ENCODE measurements at regions of chr2 and their contacts with region 1.

Region 1: GRCh38 chr2:37083873-37084794 is at the starts of genes GPATCH11 and HEATR5B:
- DNase-seq: peak; percentile 80 to 98 (median 89)
- ATAC-seq: peak; percentile 84
- H3K4me3 ChIP-seq: peak within 1 kb of the TSS; percentile 94
- H3K4me3 Mint-ChIP-seq: no peak within 1 kb of the TSS
- H3K27ac ChIP-seq: peak within 1 kb of the TSS; percentile 77 to 82
- H3K27ac Mint-ChIP-seq: no peak within 1 kb of the TSS
- H3K4me1 ChIP-seq: peaks cover 42% of the 10 kb centered on the region
- H3K4me1 Mint-ChIP-seq: no peaks in the 10 kb centered on the region
- H3K27me3 ChIP-seq: no peaks in the 10 kb centered on the region
- H3K27me3 Mint-ChIP-seq: no peaks in the 10 kb centered on the region
- CTCF ChIP-seq: no peak
- total RNA-seq, gene GPATCH11: 4.0 to 4.1 TPM
- total RNA-seq, gene HEATR5B: 23.4 to 23.9 TPM

Region 2: DNA sequence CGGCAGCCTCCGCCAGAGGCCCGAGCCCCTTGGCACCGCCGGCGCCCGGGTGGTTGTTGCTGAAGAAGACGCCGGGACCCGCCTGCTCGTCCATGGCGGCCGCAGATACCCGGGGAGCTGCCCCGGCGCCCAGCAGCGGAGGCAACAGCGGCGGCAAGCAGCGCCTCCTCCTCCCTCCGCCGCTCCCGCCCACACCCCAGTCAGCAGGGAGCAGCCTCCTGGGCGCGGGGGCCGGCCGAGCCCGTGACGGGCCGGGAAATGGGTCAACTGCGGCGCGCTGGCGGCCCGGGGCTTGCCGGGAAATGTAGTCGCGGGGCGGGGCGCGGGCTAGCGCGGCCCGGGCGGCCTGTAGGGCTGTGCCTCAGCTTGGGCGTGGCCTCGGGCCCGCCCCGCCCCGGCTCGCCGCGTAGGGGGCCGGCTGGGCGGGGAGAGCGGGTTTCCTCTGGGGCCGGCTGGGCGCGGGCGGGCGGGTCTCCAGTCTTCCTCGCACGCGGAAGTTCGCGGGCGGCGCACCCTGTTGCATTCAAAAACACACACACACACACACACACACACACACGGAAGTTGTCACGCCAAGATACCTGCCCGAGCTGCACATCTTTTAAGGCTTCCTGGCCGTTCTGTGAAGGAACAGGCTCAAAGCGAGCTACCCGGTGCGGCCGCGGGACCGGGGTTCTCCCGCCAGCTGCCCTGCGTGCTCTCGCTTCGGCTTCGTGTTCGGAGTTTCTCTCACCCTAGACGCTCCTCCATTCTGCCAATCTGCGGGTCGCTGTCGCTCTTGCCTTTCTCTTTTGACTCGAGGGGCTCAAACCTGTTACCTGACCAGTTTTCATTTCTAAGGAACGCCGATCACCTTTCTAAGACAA is 117.5 kb before region 1 on chr2 and contains the start of gene STRN:
- CTCF ChIA-PET with region 1: no interaction called
- POLR2A ChIA-PET with region 1: interaction called, 16 read pairs
- intact Hi-C with region 1: loop called (anchors 5 to 10 kb)
- DNase-seq: peak; percentile 93 to 99 (median 98)
- ATAC-seq: peak; percentile 88
- H3K4me3 ChIP-seq: peak within 1 kb of the TSS; percentile 86
- H3K4me3 Mint-ChIP-seq: peak within 1 kb of the TSS; percentile 99
- H3K27ac ChIP-seq: peak within 1 kb of the TSS; percentile 89 to 90
- H3K27ac Mint-ChIP-seq: peak within 1 kb of the TSS; percentile 97
- H3K4me1 ChIP-seq: peaks cover 26% of the 10 kb centered on the region
- H3K4me1 Mint-ChIP-seq: peaks cover 58% of the 10 kb centered on the region
- H3K27me3 ChIP-seq: no peaks in the 10 kb centered on the region
- H3K27me3 Mint-ChIP-seq: no peaks in the 10 kb centered on the region
- CTCF ChIP-seq: no peak
- total RNA-seq, gene STRN: 20.4 to 20.8 TPM

Region 3: DNA sequence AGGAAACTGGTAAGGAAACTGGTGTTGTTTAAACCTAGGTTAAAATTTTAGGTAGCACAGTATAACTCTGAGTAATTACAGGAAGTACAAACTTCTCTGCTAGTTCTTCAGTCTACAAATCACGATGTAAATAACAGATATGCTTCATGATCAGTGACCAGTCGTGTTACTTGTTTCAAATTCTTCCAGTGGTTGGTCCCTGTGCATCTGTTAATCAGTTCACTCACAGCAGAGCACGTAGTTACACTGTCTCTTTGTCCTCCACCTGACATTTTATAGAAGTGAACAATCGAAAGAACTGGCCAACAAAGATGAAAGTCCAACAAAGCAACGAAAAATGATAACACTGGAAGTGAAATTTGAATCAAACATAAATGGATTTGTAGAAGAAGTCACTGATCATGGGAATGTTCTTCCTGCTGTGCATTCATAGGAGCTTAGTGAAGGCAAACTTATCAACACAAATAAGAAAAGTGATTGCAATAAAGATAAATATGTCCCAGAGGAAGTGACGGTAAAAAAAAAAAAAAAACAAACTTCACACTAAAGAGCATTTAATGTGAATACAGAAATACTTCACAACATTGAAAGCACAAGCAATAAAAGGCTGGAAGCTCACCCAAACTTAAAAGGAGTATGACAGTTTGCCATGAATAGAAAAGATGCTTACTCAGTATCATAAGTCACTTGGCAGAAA is 65.6 kb after region 1 on chr2:
- CTCF ChIA-PET with region 1: no interaction called
- POLR2A ChIA-PET with region 1: interaction called, 3 read pairs
- intact Hi-C with region 1: loop called in 1 of 2 experiments (anchors 5 kb)
- DNase-seq: peak in 3 of 14 experiments; percentile 38 to 58 (median 54)
- ATAC-seq: peak; percentile 88
- H3K4me3 ChIP-seq: peak overlapping the region; percentile 3
- H3K4me3 Mint-ChIP-seq: peak overlapping the region; percentile 57
- H3K27ac ChIP-seq: no peak overlapping the region
- H3K27ac Mint-ChIP-seq: peak overlapping the region; percentile 81
- H3K4me1 ChIP-seq: peaks cover 1% of the 10 kb centered on the region
- H3K4me1 Mint-ChIP-seq: peaks cover 52% of the 10 kb centered on the region
- H3K27me3 ChIP-seq: no peaks in the 10 kb centered on the region
- H3K27me3 Mint-ChIP-seq: no peaks in the 10 kb centered on the region
- CTCF ChIP-seq: no peak

Region 4: DNA sequence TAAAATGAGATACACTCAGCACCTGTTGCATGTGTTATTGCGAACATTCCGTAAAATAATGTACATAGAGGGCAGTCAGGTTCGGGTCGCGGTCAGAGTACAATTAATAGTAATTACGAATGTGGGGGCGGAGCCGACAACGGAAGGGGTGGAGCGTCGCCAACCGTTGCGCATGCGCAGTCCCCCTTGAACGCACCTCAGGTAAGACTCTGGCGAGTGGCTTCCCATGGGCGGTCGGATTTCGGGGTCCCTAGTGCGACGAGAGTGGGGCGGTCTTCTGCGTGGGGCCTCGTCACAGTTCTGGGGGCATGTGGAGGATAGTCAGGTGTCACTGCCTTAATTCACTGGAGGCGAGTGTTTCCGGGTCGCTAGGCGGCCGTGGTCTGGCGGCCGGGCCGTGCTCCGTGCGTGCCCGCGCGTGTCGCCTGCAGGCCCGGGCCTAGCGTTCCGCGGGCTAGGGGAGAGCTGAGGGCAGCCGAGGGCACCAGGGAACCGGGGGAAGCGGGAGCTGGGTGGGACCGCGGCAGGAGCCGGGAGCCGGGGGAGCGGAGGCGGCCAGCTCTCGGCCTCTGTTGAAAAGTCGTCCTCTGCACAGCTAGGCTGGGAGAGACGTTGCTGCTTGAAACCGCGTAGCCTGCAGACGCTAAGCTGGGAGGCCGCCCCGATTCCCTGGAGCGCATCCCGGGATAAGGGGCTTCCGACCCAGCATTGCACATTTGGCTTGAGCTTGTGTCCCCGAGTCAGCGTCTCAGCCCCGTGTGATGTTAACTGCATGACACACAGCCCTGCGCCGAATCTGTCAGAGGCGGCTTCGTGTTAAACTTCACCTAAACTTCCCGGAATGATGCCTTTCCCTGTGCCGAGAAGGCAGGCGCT is 112.4 kb after region 1 on chr2 and contains the start of gene CEBPZOS:
- CTCF ChIA-PET with region 1: no interaction called
- POLR2A ChIA-PET with region 1: interaction called, 3 read pairs
- intact Hi-C with region 1: loop called in 1 of 2 experiments (anchors 10 kb)
- DNase-seq: peak; percentile 81 to 94 (median 90)
- ATAC-seq: peak; percentile 87
- H3K4me3 ChIP-seq: peak within 1 kb of the TSS; percentile 87
- H3K4me3 Mint-ChIP-seq: peak within 1 kb of the TSS; percentile 99
- H3K27ac ChIP-seq: peak within 1 kb of the TSS; percentile 70 to 82
- H3K27ac Mint-ChIP-seq: peak within 1 kb of the TSS; percentile 95
- H3K4me1 ChIP-seq: peaks cover 34% of the 10 kb centered on the region
- H3K4me1 Mint-ChIP-seq: peaks cover 35% of the 10 kb centered on the region
- H3K27me3 ChIP-seq: no peaks in the 10 kb centered on the region
- H3K27me3 Mint-ChIP-seq: no peaks in the 10 kb centered on the region
- CTCF ChIP-seq: no peak
- total RNA-seq, gene CEBPZOS: 23.4 to 24.6 TPM

Region 5: DNA sequence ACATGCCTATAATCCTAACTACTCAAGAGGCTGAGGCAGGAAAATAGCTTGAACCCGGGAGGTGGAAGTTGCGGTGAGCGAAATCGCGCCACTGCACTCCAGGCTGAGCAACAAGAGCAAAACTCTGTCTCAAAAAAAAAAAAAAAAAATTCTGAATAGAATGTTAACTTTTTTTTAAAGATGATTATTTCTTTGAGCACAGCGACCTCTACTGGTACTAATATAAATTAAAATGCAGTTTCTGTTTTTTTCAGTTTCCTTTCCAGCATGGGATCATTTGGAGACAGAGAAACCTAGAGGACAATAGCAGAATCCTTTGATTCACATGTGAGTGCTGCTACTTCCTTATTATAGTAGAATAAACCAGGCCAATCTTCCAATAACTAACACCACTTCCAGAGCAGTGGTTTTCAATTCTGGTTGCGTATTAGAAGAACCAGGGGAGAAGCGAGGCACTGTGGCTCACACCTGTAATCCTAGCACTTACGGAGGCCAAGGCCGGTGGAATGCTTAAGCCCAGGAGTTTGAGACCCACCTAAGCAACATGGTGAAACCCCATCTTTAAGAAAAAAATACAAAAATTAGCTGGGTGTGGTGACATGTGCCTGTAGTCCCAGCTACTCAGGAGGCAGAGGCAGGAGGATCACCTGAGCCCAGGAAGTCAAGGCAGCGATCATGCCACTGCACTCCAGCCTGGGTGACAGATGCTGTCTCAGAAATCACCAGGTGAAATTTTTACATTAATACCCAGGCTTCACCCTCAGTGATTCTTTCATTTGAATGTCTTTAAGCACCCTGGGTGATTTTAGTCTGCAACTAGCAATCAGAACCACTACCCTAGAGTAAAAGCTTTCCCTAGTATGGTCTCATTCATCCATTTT is 1657.0 kb after region 1 on chr2:
- CTCF ChIA-PET with region 1: no interaction called
- POLR2A ChIA-PET with region 1: no interaction called
- intact Hi-C with region 1: loop called in 1 of 2 experiments (anchors 10 kb)
- DNase-seq: peak in 6 of 14 experiments; percentile 25 to 76 (median 51)
- ATAC-seq: peak; percentile 33
- H3K4me3 ChIP-seq: no peak overlapping the region
- H3K4me3 Mint-ChIP-seq: peak overlapping the region; percentile 1
- H3K27ac ChIP-seq: no peak overlapping the region
- H3K27ac Mint-ChIP-seq: peak overlapping the region; percentile 43
- H3K4me1 ChIP-seq: peaks cover 17% of the 10 kb centered on the region
- H3K4me1 Mint-ChIP-seq: peaks cover 54% of the 10 kb centered on the region
- H3K27me3 ChIP-seq: no peaks in the 10 kb centered on the region
- H3K27me3 Mint-ChIP-seq: no peaks in the 10 kb centered on the region
- CTCF ChIP-seq: peak; percentile 78